ENCODE measurements at regions of chr17 and their contacts with region 1.

Region 1: DNA sequence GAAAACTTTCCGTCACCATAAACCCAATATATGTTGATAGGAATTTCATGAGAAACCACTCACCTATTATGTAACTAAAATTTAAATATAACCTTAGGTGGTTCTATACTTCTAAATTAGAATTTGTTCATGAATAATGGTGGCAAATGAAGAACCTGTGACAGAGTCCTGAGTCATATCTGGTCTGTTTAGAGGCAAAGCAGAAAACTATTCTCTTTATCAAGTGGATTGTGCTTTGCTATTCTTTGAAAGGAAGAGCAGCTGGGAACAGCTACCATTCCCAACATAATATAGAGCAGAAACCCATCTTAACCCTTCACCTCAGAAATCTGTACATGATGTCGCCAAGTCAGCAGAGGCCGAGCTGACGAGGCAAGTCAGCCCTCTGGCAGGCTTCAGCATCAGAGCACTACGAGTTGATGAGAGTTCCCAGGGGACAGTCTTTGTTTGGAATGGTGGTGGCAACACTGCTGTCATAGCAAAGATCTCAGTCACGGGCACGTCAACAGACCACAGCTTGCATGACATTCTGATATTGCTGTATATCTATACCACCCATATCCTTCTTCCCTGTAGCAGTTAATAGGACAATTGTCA is 631.9 kb upstream of the CA10 start:
- DNase-seq: no peak
- ATAC-seq: no peak
- H3K4me3 ChIP-seq: no peak overlapping the region
- H3K27ac ChIP-seq: no peak overlapping the region
- H3K4me1 ChIP-seq: no peaks in the 10 kb centered on the region
- H3K27me3 ChIP-seq: no peaks in the 10 kb centered on the region
- CTCF ChIP-seq: no peak
- POLR2A ChIP-seq: no peak

Region 2: GRCh38 chr17:52754838-52755237 is 35.6 kb before region 1 on chr17:
- intact Hi-C with region 1: loop called in 1 of 10 experiments (anchors 5 kb)
- DNase-seq: no peak
- ATAC-seq: no peak
- H3K4me3 ChIP-seq: no peak overlapping the region
- H3K27ac ChIP-seq: no peak overlapping the region
- H3K4me1 ChIP-seq: peaks cover 0 to 4% (median 0%) of the 10 kb centered on the region in 12 donors
- H3K27me3 ChIP-seq: no peaks in the 10 kb centered on the region
- CTCF ChIP-seq: no peak
- POLR2A ChIP-seq: no peak

Measured in heart left ventricle (tissue), 16 donors.